ENCODE measurements at regions of chr11 and their contacts with region 1.

Region 1: DNA sequence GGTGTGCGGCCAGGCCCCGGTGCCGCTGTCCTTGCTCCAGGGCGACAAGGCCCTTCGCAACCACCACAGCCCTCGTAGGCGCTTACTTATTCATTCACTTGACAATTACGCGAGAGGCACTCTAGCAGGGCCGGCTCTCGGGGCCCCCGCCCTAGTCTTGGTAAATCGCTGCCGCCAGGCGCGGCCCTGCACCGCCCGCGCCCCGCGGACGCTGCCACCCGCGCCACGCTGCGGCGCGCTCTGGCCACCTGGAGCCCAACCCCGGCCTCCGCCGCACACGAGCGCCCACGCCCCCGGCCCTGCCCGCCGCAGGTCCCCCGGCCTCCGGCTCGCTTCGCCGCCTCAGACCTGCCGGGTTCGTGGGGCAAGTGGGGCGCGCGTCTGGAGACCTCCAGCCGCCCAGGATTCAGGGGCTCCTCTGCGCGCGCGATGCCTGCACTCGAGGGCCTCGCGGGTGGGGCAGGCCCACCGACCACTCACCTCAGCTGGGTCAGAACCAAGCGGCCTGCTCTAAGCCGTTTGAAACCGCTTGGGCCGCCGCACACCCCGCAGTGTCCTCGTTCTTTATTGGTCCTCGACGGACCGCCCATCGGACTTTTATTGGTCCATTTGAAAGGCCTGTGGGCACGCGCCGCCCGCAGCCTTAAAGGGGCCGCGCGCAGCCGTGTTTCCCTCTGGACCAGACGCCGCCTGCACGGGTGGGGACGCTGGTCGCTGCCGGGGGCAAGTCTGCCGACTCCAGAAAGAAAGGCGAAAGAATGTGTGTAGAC is at the start of gene CKAP5:
- DNase-seq: peak; percentile 62 to 90 (median 79)
- ATAC-seq: peak; percentile 94 to 95 (median 94)
- H3K4me3 ChIP-seq: peak within 1 kb of the TSS; percentile 77 to 87
- H3K4me3 Mint-ChIP-seq: peak within 1 kb of the TSS; percentile 92 to 98 (median 95)
- H3K27ac ChIP-seq: peak within 1 kb of the TSS; percentile 66
- H3K27ac Mint-ChIP-seq: peak within 1 kb of the TSS; percentile 90 to 93
- H3K4me1 ChIP-seq: peaks cover 13 to 17% of the 10 kb centered on the region in 2 experiments
- H3K4me1 Mint-ChIP-seq: peaks cover 34 to 47% (median 44%) of the 10 kb centered on the region in 3 donors
- H3K27me3 ChIP-seq: no peaks in the 10 kb centered on the region
- H3K27me3 Mint-ChIP-seq: no peaks in the 10 kb centered on the region
- total RNA-seq, gene CKAP5: 34.8 to 44.6 (median 38.0) TPM

Region 2: GRCh38 chr11:45900916-45901617 is 944.9 kb before region 1 on chr11:
- CTCF ChIA-PET with region 1: interaction called in 1 of 2 experiments, 10 read pairs
- POLR2A ChIA-PET with region 1: no interaction called
- DNase-seq: no peak
- ATAC-seq: no peak
- H3K4me3 ChIP-seq: no peak overlapping the region
- H3K4me3 Mint-ChIP-seq: peak overlapping the region; percentile 49 to 65 (median 59)
- H3K27ac ChIP-seq: no peak overlapping the region
- H3K27ac Mint-ChIP-seq: no peak overlapping the region
- H3K4me1 ChIP-seq: peaks cover 0 to 25% of the 10 kb centered on the region in 2 experiments
- H3K4me1 Mint-ChIP-seq: peaks cover 7 to 16% (median 13%) of the 10 kb centered on the region in 3 donors
- H3K27me3 ChIP-seq: peaks cover 3 to 49% of the 10 kb centered on the region in 2 experiments
- H3K27me3 Mint-ChIP-seq: peaks cover 15 to 23% of the 10 kb centered on the region in 2 donors

Region 3: DNA sequence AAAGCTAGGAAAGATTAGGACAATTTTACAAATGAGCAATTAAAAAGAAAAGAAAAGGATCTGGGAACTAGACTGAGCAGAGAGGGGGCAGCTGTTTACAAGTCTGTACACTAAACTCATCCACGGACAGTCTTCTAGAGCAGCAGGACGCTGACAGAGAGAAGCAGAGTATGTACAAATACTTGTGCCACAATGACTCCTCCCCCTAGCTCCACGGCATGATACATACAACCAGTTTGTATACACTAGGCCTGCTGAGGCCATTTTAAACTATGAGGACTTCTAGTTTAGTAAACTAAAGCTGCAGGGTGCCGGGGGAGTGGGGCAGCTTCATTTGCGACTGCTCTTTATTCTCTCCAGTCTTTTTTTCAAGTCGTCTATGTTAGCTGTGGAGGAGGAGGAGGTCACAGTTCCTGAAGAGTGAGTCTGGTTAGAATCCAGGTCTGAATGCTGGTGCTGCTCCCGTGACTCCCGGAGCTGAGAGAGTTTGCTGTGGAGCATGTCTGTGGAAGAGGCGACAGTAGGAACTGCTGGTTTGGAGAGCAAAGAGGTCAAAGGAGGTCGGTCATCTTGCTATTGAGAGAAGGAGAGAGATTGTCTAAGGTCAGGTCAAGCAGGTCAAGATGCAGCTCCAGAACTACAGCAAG is 102.1 kb before region 1 on chr11:
- CTCF ChIA-PET with region 1: no interaction called
- POLR2A ChIA-PET with region 1: no interaction called
- DNase-seq: no peak
- ATAC-seq: no peak
- H3K4me3 ChIP-seq: no peak overlapping the region
- H3K4me3 Mint-ChIP-seq: no peak overlapping the region
- H3K27ac ChIP-seq: no peak overlapping the region
- H3K27ac Mint-ChIP-seq: no peak overlapping the region
- H3K4me1 ChIP-seq: no peaks in the 10 kb centered on the region
- H3K4me1 Mint-ChIP-seq: no peaks in the 10 kb centered on the region
- H3K27me3 ChIP-seq: no peaks in the 10 kb centered on the region
- H3K27me3 Mint-ChIP-seq: no peaks in the 10 kb centered on the region

Region 4: DNA sequence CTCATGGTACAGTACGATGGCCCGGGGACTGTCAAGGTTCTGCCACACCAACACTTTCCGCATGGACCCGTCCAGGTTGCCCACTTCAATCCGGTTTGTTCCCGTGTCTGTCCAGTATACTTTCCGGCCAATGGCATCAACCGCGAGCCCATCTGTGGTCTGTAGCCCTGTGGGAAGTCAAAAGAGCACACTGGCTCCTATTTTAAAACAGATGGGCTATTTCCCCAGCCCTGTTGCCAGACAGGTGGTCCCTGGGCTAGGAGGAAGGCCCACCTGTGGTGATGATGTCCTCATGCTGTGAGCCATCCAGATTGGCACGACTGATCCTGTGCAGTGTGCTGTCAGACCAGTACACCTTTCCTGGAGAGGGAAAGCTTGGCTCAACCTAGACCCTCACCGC is 30.5 kb after region 1 on chr11:
- CTCF ChIA-PET with region 1: no interaction called
- POLR2A ChIA-PET with region 1: no interaction called
- DNase-seq: no peak
- ATAC-seq: no peak
- H3K4me3 ChIP-seq: no peak overlapping the region
- H3K4me3 Mint-ChIP-seq: no peak overlapping the region
- H3K27ac ChIP-seq: no peak overlapping the region
- H3K27ac Mint-ChIP-seq: no peak overlapping the region
- H3K4me1 ChIP-seq: no peaks in the 10 kb centered on the region
- H3K4me1 Mint-ChIP-seq: no peaks in the 10 kb centered on the region
- H3K27me3 ChIP-seq: peaks cover 0 to 27% of the 10 kb centered on the region in 2 experiments
- H3K27me3 Mint-ChIP-seq: peaks cover 4 to 5% of the 10 kb centered on the region in 2 donors

Region 5: DNA sequence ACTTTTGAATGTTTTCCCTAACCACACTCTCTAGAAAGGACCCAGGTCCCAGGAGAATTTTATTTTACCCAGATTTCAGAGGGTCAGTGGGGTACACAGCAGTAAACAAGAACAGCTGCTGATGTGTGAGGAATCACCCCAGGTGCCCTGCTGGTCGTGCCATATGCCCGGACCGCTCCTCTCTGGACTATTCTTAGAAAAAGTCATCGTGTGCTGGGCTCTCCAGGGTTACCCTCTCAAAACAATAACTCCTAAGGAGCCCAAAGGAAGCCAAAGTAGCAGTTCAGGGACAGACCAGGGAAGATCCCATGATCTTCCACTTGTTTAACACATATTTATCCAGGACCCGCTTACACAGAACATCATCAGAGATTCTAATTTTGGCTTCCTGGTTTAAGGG is 42.7 kb after region 1 on chr11:
- CTCF ChIA-PET with region 1: interaction called in 1 of 2 experiments, 10 read pairs
- POLR2A ChIA-PET with region 1: no interaction called
- DNase-seq: no peak
- ATAC-seq: no peak
- H3K4me3 ChIP-seq: no peak overlapping the region
- H3K4me3 Mint-ChIP-seq: no peak overlapping the region
- H3K27ac ChIP-seq: no peak overlapping the region
- H3K27ac Mint-ChIP-seq: no peak overlapping the region
- H3K4me1 ChIP-seq: peaks cover 0 to 3% of the 10 kb centered on the region in 2 experiments
- H3K4me1 Mint-ChIP-seq: no peaks in the 10 kb centered on the region
- H3K27me3 ChIP-seq: peaks cover 0 to 17% of the 10 kb centered on the region in 2 experiments
- H3K27me3 Mint-ChIP-seq: peaks cover 8 to 12% of the 10 kb centered on the region in 2 donors

Measured in T-cell (primary cell).